ENCODE measurements at regions of chr11 and their contacts with region 1.

Region 1: DNA sequence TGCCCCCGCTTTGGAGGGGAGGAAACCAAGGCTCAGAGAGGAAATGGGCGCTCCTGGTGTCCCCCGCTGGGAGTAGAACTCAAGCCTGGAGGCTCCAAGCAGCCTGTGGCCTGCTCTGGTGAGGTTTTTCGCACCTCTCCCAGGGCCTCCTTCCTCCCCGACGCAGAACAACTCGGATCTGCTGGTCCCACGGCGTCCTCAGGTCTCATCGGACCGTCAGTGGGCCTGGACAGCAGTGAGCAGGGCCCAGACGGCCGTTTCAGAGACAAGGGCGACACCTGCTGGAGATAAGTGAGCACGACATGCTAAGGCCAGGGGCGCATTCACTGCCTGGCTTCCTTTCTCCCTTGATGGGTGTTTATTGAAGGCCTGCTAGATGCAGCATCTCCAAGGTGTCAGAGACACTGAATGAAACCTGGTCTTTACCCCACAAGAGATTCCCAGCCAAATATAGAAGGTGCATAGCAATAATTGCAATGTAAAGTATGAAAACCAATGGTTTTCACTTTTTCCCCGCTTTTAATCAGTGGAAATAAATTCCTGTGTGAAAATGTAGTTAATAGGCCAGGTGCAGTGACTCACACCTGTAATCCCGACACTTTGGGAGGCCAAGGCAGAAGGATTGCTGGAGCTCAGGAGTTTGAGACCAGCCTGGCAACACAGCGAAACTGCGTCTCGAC is 26.9 kb upstream of the CD82 start:
- DNase-seq: no peak
- ATAC-seq: peak; percentile 99
- H3K4me3 ChIP-seq: no peak overlapping the region
- H3K27ac ChIP-seq: no peak overlapping the region
- H3K4me1 ChIP-seq: no peaks in the 10 kb centered on the region
- H3K27me3 ChIP-seq: peaks cover 0 to 1% of the 10 kb centered on the region in 2 experiments; a peak in 3 of 4 replicates
- CTCF ChIP-seq: peak; percentile 94 to 96 (median 96); a peak in 5 of 6 replicates
- EP300 ChIP-seq: no peak
- POLR2A ChIP-seq: no peak
- RAD21 ChIP-seq: peak; percentile 90

Region 2: GRCh38 chr11:44110231-44110679 is 428.3 kb before region 1 on chr11:
- CTCF ChIA-PET with region 1: interaction called, 6 read pairs
- POLR2A ChIA-PET with region 1: interaction called, 4 read pairs
- RAD21 ChIA-PET with region 1: interaction called, 4 read pairs
- SMC1A ChIA-PET with region 1: interaction called, 5 read pairs
- in situ Hi-C with region 1: no loop called
- intact Hi-C with region 1: loop called (anchors 1 kb)
- DNase-seq: no peak
- ATAC-seq: peak; percentile 98
- H3K4me3 ChIP-seq: no peak overlapping the region
- H3K27ac ChIP-seq: 0 out of 2 replicates have a peak overlapping the region, but pooled peaks have one; percentile 22
- H3K4me1 ChIP-seq: peaks cover 8% of the 10 kb centered on the region
- H3K27me3 ChIP-seq: no peaks in the 10 kb centered on the region
- CTCF ChIP-seq: peak; percentile 85 to 94 (median 90)
- EP300 ChIP-seq: no peak
- POLR2A ChIP-seq: no peak
- RAD21 ChIP-seq: peak; percentile 90

Region 3: GRCh38 chr11:44133335-44133946 is 405.1 kb before region 1 on chr11:
- CTCF ChIA-PET with region 1: interaction called, 6 read pairs
- POLR2A ChIA-PET with region 1: no interaction called
- RAD21 ChIA-PET with region 1: interaction called, 4 read pairs
- SMC1A ChIA-PET with region 1: interaction called, 7 read pairs
- in situ Hi-C with region 1: no loop called
- intact Hi-C with region 1: loop called (anchors 1 kb)
- DNase-seq: no peak
- ATAC-seq: peak; percentile 55; the same call in 2 of the 3 replicates
- H3K4me3 ChIP-seq: no peak overlapping the region
- H3K27ac ChIP-seq: no peak overlapping the region
- H3K4me1 ChIP-seq: no peaks in the 10 kb centered on the region
- H3K27me3 ChIP-seq: no peaks in the 10 kb centered on the region
- CTCF ChIP-seq: peak; percentile 52 to 63 (median 59)
- EP300 ChIP-seq: no peak
- POLR2A ChIP-seq: no peak
- RAD21 ChIP-seq: peak; percentile 52

Region 4: DNA sequence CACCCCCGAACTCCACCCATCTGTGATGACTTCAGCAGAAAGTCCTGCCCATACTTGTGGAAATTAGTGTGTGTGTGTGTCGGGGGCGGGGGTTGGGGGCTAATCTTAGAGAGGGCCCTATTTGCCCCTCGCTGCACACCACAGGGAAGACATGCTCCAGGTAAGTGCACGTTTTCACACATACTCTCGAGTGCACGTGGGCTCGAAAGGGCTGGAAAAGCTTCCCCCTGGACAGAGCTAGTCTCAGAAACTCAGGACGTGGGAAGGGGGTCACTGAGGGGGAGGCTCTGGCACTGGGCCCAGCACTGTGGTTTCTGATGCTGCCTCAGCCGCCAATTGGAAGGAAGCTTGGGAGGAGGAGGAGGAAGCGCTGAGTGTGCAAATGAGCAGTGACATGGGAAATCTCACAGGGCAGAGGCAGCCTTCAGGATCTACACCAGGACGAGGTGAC is 13.7 kb before region 1 on chr11:
- CTCF ChIA-PET with region 1: interaction called, 10 read pairs
- POLR2A ChIA-PET with region 1: no interaction called
- RAD21 ChIA-PET with region 1: interaction called, 5 read pairs
- SMC1A ChIA-PET with region 1: interaction called, 3 read pairs
- in situ Hi-C with region 1: no loop called
- intact Hi-C with region 1: no loop called
- DNase-seq: no peak
- ATAC-seq: no peak
- H3K4me3 ChIP-seq: no peak overlapping the region
- H3K27ac ChIP-seq: no peak overlapping the region
- H3K4me1 ChIP-seq: no peaks in the 10 kb centered on the region
- H3K27me3 ChIP-seq: peaks cover under 1 to 2% of the 10 kb centered on the region in 2 experiments; a peak in 1 of 4 replicates
- CTCF ChIP-seq: no peak
- EP300 ChIP-seq: no peak
- POLR2A ChIP-seq: no peak
- RAD21 ChIP-seq: no peak

Region 5: GRCh38 chr11:44565211-44565952 is 26.9 kb after region 1 on chr11 and contains the start of gene CD82:
- CTCF ChIA-PET with region 1: no interaction called
- POLR2A ChIA-PET with region 1: no interaction called
- RAD21 ChIA-PET with region 1: no interaction called
- SMC1A ChIA-PET with region 1: no interaction called
- in situ Hi-C with region 1: no loop called
- intact Hi-C with region 1: no loop called
- DNase-seq: peak; percentile 84
- ATAC-seq: peak; percentile 84
- H3K4me3 ChIP-seq: peak within 1 kb of the TSS; percentile 89
- H3K27ac ChIP-seq: peak within 1 kb of the TSS; percentile 83
- H3K4me1 ChIP-seq: peaks cover 38% of the 10 kb centered on the region
- H3K27me3 ChIP-seq: no peaks in the 10 kb centered on the region
- CTCF ChIP-seq: peak in 2 of 3 experiments; percentile 17 to 32; a peak in 2 of 6 replicates
- EP300 ChIP-seq: no peak
- POLR2A ChIP-seq: peak; percentile 96
- RAD21 ChIP-seq: no peak
- polyA plus RNA-seq, gene CD82: 5.2 to 8.2 TPM

Region 6: GRCh38 chr11:44823006-44823405 is 284.5 kb after region 1 on chr11:
- CTCF ChIA-PET with region 1: no interaction called
- POLR2A ChIA-PET with region 1: no interaction called
- RAD21 ChIA-PET with region 1: no interaction called
- SMC1A ChIA-PET with region 1: no interaction called
- in situ Hi-C with region 1: no loop called
- intact Hi-C with region 1: no loop called
- DNase-seq: no peak
- ATAC-seq: peak; percentile 60
- H3K4me3 ChIP-seq: no peak overlapping the region
- H3K27ac ChIP-seq: no peak overlapping the region
- H3K4me1 ChIP-seq: no peaks in the 10 kb centered on the region
- H3K27me3 ChIP-seq: no peaks in the 10 kb centered on the region
- CTCF ChIP-seq: peak in 2 of 3 experiments; percentile 27 to 39; a peak in 2 of 6 replicates
- EP300 ChIP-seq: no peak
- POLR2A ChIP-seq: no peak
- RAD21 ChIP-seq: no peak